Naive thymus-derived CD4-positive, alpha-beta T cell (primary cell): ENCODE measurements at regions of chr4 and their contacts with region 1.

Region 1: DNA sequence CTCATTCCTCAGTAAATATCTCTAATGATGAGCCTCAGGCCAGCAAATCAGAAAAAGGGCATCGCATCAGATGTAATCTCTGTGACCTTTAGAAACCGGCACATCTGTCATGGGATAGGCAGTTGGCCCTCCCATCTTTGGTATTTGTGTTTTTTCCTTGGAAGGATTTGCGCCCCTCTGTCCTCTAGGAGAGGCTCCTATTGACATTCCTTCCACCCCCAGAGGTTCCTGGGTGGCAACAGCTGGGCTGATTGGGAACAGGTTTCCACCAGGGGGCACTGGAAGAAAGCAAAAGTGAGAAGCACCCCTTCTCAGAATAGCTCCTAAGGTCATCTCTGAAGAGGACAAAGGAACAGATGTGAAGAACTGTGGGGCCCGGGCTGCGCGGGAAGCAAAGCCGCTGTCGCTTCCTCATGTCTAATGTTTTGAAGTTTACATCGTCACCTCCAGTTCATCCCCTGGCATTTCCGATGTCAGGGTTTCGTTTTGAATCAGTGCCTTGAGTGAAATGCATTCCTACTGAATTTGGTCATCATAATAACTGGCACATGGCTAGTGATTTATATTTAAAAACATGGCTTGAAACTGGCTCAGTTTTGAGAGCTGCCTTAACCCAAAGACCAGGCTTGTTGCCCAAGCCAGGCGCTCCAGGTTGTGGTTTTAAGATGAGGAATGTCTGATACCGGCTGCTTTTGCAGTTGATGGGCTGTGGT is 6.2 kb downstream of the TXK start:
- DNase-seq: peak; percentile 30 to 78 (median 71)
- ATAC-seq: peak; percentile 82
- H3K4me3 ChIP-seq: peak overlapping the region; percentile 52
- H3K4me3 Mint-ChIP-seq: peak overlapping the region in 9 of 10 donors; percentile 80 to 99 (median 91)
- H3K27ac ChIP-seq: peak overlapping the region; percentile 79
- H3K27ac Mint-ChIP-seq: peak overlapping the region in 7 of 9 donors; percentile 89 to 97 (median 95)
- H3K4me1 ChIP-seq: peaks cover 32 to 81% of the 10 kb centered on the region in 2 donors
- H3K4me1 Mint-ChIP-seq: peaks cover 0 to 89% (median 84%) of the 10 kb centered on the region in 7 donors
- H3K27me3 ChIP-seq: no peaks in the 10 kb centered on the region
- H3K27me3 Mint-ChIP-seq: no peaks in the 10 kb centered on the region

Region 2: GRCh38 chr4:47287745-47288144 is 840.1 kb before region 1 on chr4:
- CTCF ChIA-PET with region 1: no interaction called
- POLR2A ChIA-PET with region 1: no interaction called
- intact Hi-C with region 1: no loop called
- DNase-seq: no peak
- ATAC-seq: no peak
- H3K4me3 ChIP-seq: no peak overlapping the region
- H3K4me3 Mint-ChIP-seq: no peak overlapping the region
- H3K27ac ChIP-seq: no peak overlapping the region
- H3K27ac Mint-ChIP-seq: no peak overlapping the region
- H3K4me1 ChIP-seq: no peaks in the 10 kb centered on the region
- H3K4me1 Mint-ChIP-seq: no peaks in the 10 kb centered on the region
- H3K27me3 ChIP-seq: no peaks in the 10 kb centered on the region
- H3K27me3 Mint-ChIP-seq: peaks cover 0 to 14% (median 10%) of the 10 kb centered on the region in 5 donors

Region 3: GRCh38 chr4:47463235-47463956 is 664.4 kb before region 1 on chr4 and contains the start of gene COMMD8:
- CTCF ChIA-PET with region 1: no interaction called
- POLR2A ChIA-PET with region 1: no interaction called
- intact Hi-C with region 1: loop called in 1 of 2 experiments (anchors 1 kb)
- DNase-seq: peak; percentile 91 to 97 (median 95)
- ATAC-seq: peak; percentile 93
- H3K4me3 ChIP-seq: peak within 1 kb of the TSS; percentile 82
- H3K4me3 Mint-ChIP-seq: peak within 1 kb of the TSS; percentile 77 to 93 (median 90)
- H3K27ac ChIP-seq: peak within 1 kb of the TSS; percentile 74
- H3K27ac Mint-ChIP-seq: peak within 1 kb of the TSS; percentile 76 to 97 (median 95)
- H3K4me1 ChIP-seq: peaks cover 9 to 17% of the 10 kb centered on the region in 2 donors
- H3K4me1 Mint-ChIP-seq: peaks cover 20 to 48% (median 38%) of the 10 kb centered on the region in 7 donors
- H3K27me3 ChIP-seq: no peaks in the 10 kb centered on the region
- H3K27me3 Mint-ChIP-seq: no peaks in the 10 kb centered on the region
- total RNA-seq, gene COMMD8: 8.4 to 19.3 (median 16.7) TPM

Region 4: GRCh38 chr4:48033825-48034413 is 93.9 kb before region 1 on chr4:
- CTCF ChIA-PET with region 1: interaction called, 17 read pairs
- POLR2A ChIA-PET with region 1: no interaction called
- intact Hi-C with region 1: no loop called
- DNase-seq: peak in 7 of 9 donors; percentile 21 to 55 (median 52)
- ATAC-seq: peak; percentile 91
- H3K4me3 ChIP-seq: no peak overlapping the region
- H3K4me3 Mint-ChIP-seq: no peak overlapping the region
- H3K27ac ChIP-seq: no peak overlapping the region
- H3K27ac Mint-ChIP-seq: no peak overlapping the region
- H3K4me1 ChIP-seq: peaks cover 3 to 4% of the 10 kb centered on the region in 2 donors
- H3K4me1 Mint-ChIP-seq: peaks cover 4 to 22% (median 15%) of the 10 kb centered on the region in 7 donors
- H3K27me3 ChIP-seq: no peaks in the 10 kb centered on the region
- H3K27me3 Mint-ChIP-seq: no peaks in the 10 kb centered on the region

Region 5: GRCh38 chr4:48116582-48116981 is 11.3 kb before region 1 on chr4:
- CTCF ChIA-PET with region 1: interaction called, 7 read pairs
- POLR2A ChIA-PET with region 1: interaction called, 18 read pairs
- intact Hi-C with region 1: loop called in 1 of 2 experiments (anchors 1 kb)
- DNase-seq: no peak
- ATAC-seq: no peak
- H3K4me3 ChIP-seq: no peak overlapping the region
- H3K4me3 Mint-ChIP-seq: peak overlapping the region in 6 of 10 donors; percentile 14 to 68 (median 50)
- H3K27ac ChIP-seq: peak overlapping the region; percentile 40
- H3K27ac Mint-ChIP-seq: peak overlapping the region in 8 of 9 donors; percentile 17 to 92 (median 81)
- H3K4me1 ChIP-seq: peaks cover 9 to 55% of the 10 kb centered on the region in 2 donors
- H3K4me1 Mint-ChIP-seq: peaks cover 51 to 84% (median 79%) of the 10 kb centered on the region in 7 donors
- H3K27me3 ChIP-seq: no peaks in the 10 kb centered on the region
- H3K27me3 Mint-ChIP-seq: no peaks in the 10 kb centered on the region

Region 6: GRCh38 chr4:48162162-48162561 is 34.3 kb after region 1 on chr4:
- CTCF ChIA-PET with region 1: no interaction called
- POLR2A ChIA-PET with region 1: no interaction called
- intact Hi-C with region 1: no loop called
- DNase-seq: no peak
- ATAC-seq: no peak
- H3K4me3 ChIP-seq: no peak overlapping the region
- H3K4me3 Mint-ChIP-seq: no peak overlapping the region
- H3K27ac ChIP-seq: no peak overlapping the region
- H3K27ac Mint-ChIP-seq: no peak overlapping the region
- H3K4me1 ChIP-seq: no peaks in the 10 kb centered on the region
- H3K4me1 Mint-ChIP-seq: peaks cover 0 to 7% (median 0%) of the 10 kb centered on the region in 7 donors
- H3K27me3 ChIP-seq: no peaks in the 10 kb centered on the region
- H3K27me3 Mint-ChIP-seq: no peaks in the 10 kb centered on the region

Region 7: DNA sequence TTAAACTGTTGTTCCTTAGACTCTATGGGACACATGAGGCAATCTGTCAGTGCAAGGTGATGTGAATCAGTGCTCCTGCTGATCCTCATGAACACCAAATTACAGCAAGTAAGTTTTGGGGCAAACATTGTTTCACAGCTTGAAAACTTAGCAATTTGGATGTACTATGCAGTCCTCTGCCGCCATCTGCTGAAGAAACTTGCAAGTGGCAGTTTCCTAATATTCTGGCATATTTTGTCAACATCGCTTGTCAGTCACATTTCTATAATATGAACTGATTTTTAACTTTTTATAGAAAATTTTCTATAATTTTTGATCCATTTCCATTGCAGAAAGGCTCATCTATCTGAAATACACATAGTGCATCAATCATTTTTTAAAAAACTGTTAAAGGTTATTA is 418.5 kb after region 1 on chr4:
- CTCF ChIA-PET with region 1: no interaction called
- POLR2A ChIA-PET with region 1: no interaction called
- intact Hi-C with region 1: loop called (anchors 5 to 10 kb)
- DNase-seq: peak in 5 of 9 donors; percentile 4 to 31 (median 20)
- ATAC-seq: peak; percentile 44
- H3K4me3 ChIP-seq: no peak overlapping the region
- H3K4me3 Mint-ChIP-seq: no peak overlapping the region
- H3K27ac ChIP-seq: no peak overlapping the region
- H3K27ac Mint-ChIP-seq: peak overlapping the region in 2 of 9 donors; percentile 49 to 56
- H3K4me1 ChIP-seq: no peaks in the 10 kb centered on the region
- H3K4me1 Mint-ChIP-seq: peaks cover 0 to 2% (median 0%) of the 10 kb centered on the region in 7 donors
- H3K27me3 ChIP-seq: no peaks in the 10 kb centered on the region
- H3K27me3 Mint-ChIP-seq: no peaks in the 10 kb centered on the region

Region 8: GRCh38 chr4:48906206-48907173 is 778.7 kb after region 1 on chr4 and contains the start of gene OCIAD2:
- CTCF ChIA-PET with region 1: no interaction called
- POLR2A ChIA-PET with region 1: no interaction called
- intact Hi-C with region 1: loop called in 1 of 2 experiments (anchors 5 kb)
- DNase-seq: peak; percentile 59 to 88 (median 86)
- ATAC-seq: peak; percentile 97
- H3K4me3 ChIP-seq: peak within 1 kb of the TSS; percentile 80
- H3K4me3 Mint-ChIP-seq: peak within 1 kb of the TSS; percentile 93 to 99 (median 97)
- H3K27ac ChIP-seq: peak within 1 kb of the TSS; percentile 82
- H3K27ac Mint-ChIP-seq: peak within 1 kb of the TSS; percentile 89 to 99 (median 96)
- H3K4me1 ChIP-seq: peaks cover 18 to 33% of the 10 kb centered on the region in 2 donors
- H3K4me1 Mint-ChIP-seq: peaks cover 32 to 63% (median 52%) of the 10 kb centered on the region in 7 donors
- H3K27me3 ChIP-seq: no peaks in the 10 kb centered on the region
- H3K27me3 Mint-ChIP-seq: no peaks in the 10 kb centered on the region
- total RNA-seq, gene OCIAD2: 42.0 to 142 (median 97.5) TPM